Activated naive CD4-positive, alpha-beta T cell treated with anti-CD3 and anti-CD28 coated beads for 36 hours (primary cell): ENCODE measurements at regions of chr22 and their contacts with region 1.

Region 1: GRCh38 chr22:30253205-30253852 is 6.8 kb upstream of the LIF start:
- DNase-seq: no peak
- H3K4me3 Mint-ChIP-seq: no peak overlapping the region
- H3K27ac Mint-ChIP-seq: no peak overlapping the region
- H3K4me1 Mint-ChIP-seq: peaks cover 34% of the 10 kb centered on the region
- H3K27me3 Mint-ChIP-seq: no peaks in the 10 kb centered on the region

Region 2: GRCh38 chr22:30104501-30105156 is 148.7 kb before region 1 on chr22:
- CTCF ChIA-PET with region 1: interaction called, 5 read pairs
- intact Hi-C with region 1: loop called (anchors 1 kb)
- DNase-seq: no peak
- H3K4me3 Mint-ChIP-seq: no peak overlapping the region
- H3K27ac Mint-ChIP-seq: peak overlapping the region; percentile 24
- H3K4me1 Mint-ChIP-seq: peaks cover 38% of the 10 kb centered on the region
- H3K27me3 Mint-ChIP-seq: no peaks in the 10 kb centered on the region

Region 3: GRCh38 chr22:30116362-30117117 is 136.8 kb before region 1 on chr22:
- CTCF ChIA-PET with region 1: interaction called, 10 read pairs
- intact Hi-C with region 1: no loop called
- DNase-seq: no peak
- H3K4me3 Mint-ChIP-seq: no peak overlapping the region
- H3K27ac Mint-ChIP-seq: no peak overlapping the region
- H3K4me1 Mint-ChIP-seq: peaks cover 35% of the 10 kb centered on the region
- H3K27me3 Mint-ChIP-seq: no peaks in the 10 kb centered on the region

Region 4: GRCh38 chr22:30196141-30196879 is 57.0 kb before region 1 on chr22:
- CTCF ChIA-PET with region 1: no interaction called
- intact Hi-C with region 1: no loop called
- DNase-seq: peak; percentile 84
- H3K4me3 Mint-ChIP-seq: peak overlapping the region; percentile 57
- H3K27ac Mint-ChIP-seq: peak overlapping the region; percentile 95
- H3K4me1 Mint-ChIP-seq: peaks cover 70% of the 10 kb centered on the region
- H3K27me3 Mint-ChIP-seq: no peaks in the 10 kb centered on the region

Region 5: GRCh38 chr22:30423982-30424963 is 170.9 kb after region 1 on chr22:
- CTCF ChIA-PET with region 1: no interaction called
- intact Hi-C with region 1: no loop called
- DNase-seq: peak; percentile 99
- H3K4me3 Mint-ChIP-seq: peak overlapping the region; percentile 97
- H3K27ac Mint-ChIP-seq: peak overlapping the region; percentile 96
- H3K4me1 Mint-ChIP-seq: peaks cover 50% of the 10 kb centered on the region
- H3K27me3 Mint-ChIP-seq: no peaks in the 10 kb centered on the region